Naive thymus-derived CD4-positive, alpha-beta T cell (primary cell): ENCODE measurements at regions of chr1 and their contacts with region 1.

Region 1: GRCh38 chr1:235866913-235867845 is 473 bp upstream of the LYST start:
- DNase-seq: peak; percentile 97 to 100 (median 99)
- ATAC-seq: peak; percentile 85
- H3K4me3 ChIP-seq: peak overlapping the region; percentile 89
- H3K4me3 Mint-ChIP-seq: peak overlapping the region; percentile 84 to 99 (median 96)
- H3K27ac ChIP-seq: peak overlapping the region; percentile 99
- H3K27ac Mint-ChIP-seq: peak overlapping the region; percentile 93 to 100 (median 98)
- H3K4me1 ChIP-seq: peaks cover 25 to 31% of the 10 kb centered on the region in 2 donors
- H3K4me1 Mint-ChIP-seq: peaks cover 32 to 55% (median 51%) of the 10 kb centered on the region in 7 donors
- H3K27me3 ChIP-seq: no peaks in the 10 kb centered on the region
- H3K27me3 Mint-ChIP-seq: no peaks in the 10 kb centered on the region

Region 2: GRCh38 chr1:235295902-235296376 is 571.2 kb before region 1 on chr1:
- CTCF ChIA-PET with region 1: no interaction called
- POLR2A ChIA-PET with region 1: no interaction called
- intact Hi-C with region 1: loop called in 1 of 2 experiments (anchors 2 kb)
- DNase-seq: no peak
- ATAC-seq: no peak
- H3K4me3 ChIP-seq: no peak overlapping the region
- H3K4me3 Mint-ChIP-seq: peak overlapping the region in 9 of 10 donors; percentile 4 to 81 (median 60)
- H3K27ac ChIP-seq: no peak overlapping the region
- H3K27ac Mint-ChIP-seq: peak overlapping the region; percentile 41 to 92 (median 79)
- H3K4me1 ChIP-seq: peaks cover 38 to 47% of the 10 kb centered on the region in 2 donors
- H3K4me1 Mint-ChIP-seq: peaks cover 33 to 77% (median 65%) of the 10 kb centered on the region in 7 donors
- H3K27me3 ChIP-seq: no peaks in the 10 kb centered on the region
- H3K27me3 Mint-ChIP-seq: no peaks in the 10 kb centered on the region

Region 3: DNA sequence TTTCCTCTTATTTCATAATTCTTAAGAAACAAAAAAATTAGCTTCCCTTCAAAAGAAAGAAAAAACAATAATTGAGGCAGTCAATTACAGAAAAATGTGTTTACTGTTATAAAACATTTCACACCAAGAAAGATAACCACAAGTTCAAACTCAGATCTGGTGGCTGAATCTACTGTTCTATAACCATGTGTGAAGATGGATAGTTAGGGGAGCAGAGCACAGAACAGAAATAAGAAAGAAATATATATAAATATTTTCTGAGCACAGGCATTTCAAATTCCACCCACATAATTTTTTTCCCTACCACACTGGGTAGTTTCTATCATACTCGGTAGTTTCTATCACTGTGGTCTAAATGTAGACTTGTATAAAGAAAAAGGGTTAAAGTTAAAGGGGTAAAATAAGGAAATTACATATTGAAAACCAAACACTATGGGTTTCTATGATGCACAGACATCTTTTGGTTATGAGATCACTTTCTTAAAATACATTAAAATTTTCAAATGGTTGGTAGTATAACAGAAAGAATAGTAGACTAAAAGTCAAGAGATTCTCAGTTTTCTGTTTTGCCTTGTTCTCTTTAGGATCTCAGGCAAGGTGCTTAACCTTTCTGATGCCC is 11.3 kb before region 1 on chr1:
- CTCF ChIA-PET with region 1: interaction called, 4 read pairs
- POLR2A ChIA-PET with region 1: interaction called, 13 read pairs
- intact Hi-C with region 1: loop called in 1 of 2 experiments (anchors 1 kb)
- DNase-seq: no peak
- ATAC-seq: no peak
- H3K4me3 ChIP-seq: no peak overlapping the region
- H3K4me3 Mint-ChIP-seq: no peak overlapping the region
- H3K27ac ChIP-seq: no peak overlapping the region
- H3K27ac Mint-ChIP-seq: no peak overlapping the region
- H3K4me1 ChIP-seq: peaks cover 7 to 25% of the 10 kb centered on the region in 2 donors
- H3K4me1 Mint-ChIP-seq: peaks cover 14 to 54% (median 25%) of the 10 kb centered on the region in 7 donors
- H3K27me3 ChIP-seq: no peaks in the 10 kb centered on the region
- H3K27me3 Mint-ChIP-seq: no peaks in the 10 kb centered on the region

Region 4: GRCh38 chr1:235954306-235955283 is 87.4 kb after region 1 on chr1:
- CTCF ChIA-PET with region 1: interaction called, 5 read pairs
- POLR2A ChIA-PET with region 1: interaction called, 9 read pairs
- intact Hi-C with region 1: loop called (anchors 1 to 5 kb)
- DNase-seq: peak in 8 of 9 donors; percentile 25 to 44 (median 36)
- ATAC-seq: peak; percentile 91
- H3K4me3 ChIP-seq: peak overlapping the region; percentile 41
- H3K4me3 Mint-ChIP-seq: peak overlapping the region; percentile 22 to 79 (median 56)
- H3K27ac ChIP-seq: peak overlapping the region; percentile 9
- H3K27ac Mint-ChIP-seq: peak overlapping the region in 8 of 9 donors; percentile 30 to 89 (median 70)
- H3K4me1 ChIP-seq: peaks cover 30 to 32% of the 10 kb centered on the region in 2 donors
- H3K4me1 Mint-ChIP-seq: peaks cover 35 to 40% (median 39%) of the 10 kb centered on the region in 7 donors
- H3K27me3 ChIP-seq: no peaks in the 10 kb centered on the region
- H3K27me3 Mint-ChIP-seq: peaks cover 0 to 2% (median 0%) of the 10 kb centered on the region in 5 donors

Region 5: DNA sequence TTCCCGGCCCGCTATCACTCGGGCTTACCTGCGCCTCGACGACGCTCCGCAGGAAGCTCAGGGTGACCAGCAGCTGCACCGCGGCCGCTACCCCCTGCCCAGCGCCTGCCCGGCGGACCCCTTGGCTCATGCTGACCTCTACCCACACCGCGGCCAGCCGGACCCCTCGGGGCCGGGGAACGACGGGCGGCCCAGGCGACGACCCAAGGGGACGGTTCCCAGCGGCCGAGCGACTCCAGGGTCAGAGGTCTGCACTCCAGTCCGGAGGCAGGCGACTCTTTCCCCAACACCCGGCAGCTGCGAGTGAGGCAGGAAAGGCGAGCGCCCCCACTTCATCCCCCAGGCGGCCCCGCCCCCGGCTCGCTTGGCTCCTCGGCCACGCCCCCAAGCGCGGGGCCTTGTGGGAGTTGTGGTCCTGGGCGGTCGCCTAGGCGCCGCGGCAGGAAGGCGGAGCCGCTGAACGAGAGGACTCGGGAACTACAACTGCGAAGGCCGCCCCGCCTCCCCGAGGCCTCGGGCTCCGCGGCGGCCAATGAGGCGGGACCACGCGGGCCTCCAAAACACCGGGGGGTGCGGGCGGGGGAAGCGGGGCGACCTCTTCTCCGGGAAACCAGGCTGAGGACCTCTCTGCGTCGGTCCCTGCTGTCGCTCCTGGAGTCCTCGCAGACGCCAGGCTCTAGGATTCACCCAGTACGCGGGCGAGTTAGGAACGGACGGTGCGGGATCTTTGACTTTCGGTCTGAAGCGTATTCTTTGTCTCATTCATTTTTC is 414.7 kb after region 1 on chr1 and contains the start of gene ERO1B:
- CTCF ChIA-PET with region 1: no interaction called
- POLR2A ChIA-PET with region 1: no interaction called
- intact Hi-C with region 1: loop called (anchors 1 to 5 kb)
- DNase-seq: peak; percentile 95 to 99 (median 97)
- ATAC-seq: peak; percentile 98
- H3K4me3 ChIP-seq: peak within 1 kb of the TSS; percentile 83
- H3K4me3 Mint-ChIP-seq: peak within 1 kb of the TSS; percentile 80 to 97 (median 94)
- H3K27ac ChIP-seq: peak within 1 kb of the TSS; percentile 82
- H3K27ac Mint-ChIP-seq: peak within 1 kb of the TSS; percentile 80 to 96 (median 95)
- H3K4me1 ChIP-seq: peaks cover 7 to 34% of the 10 kb centered on the region in 2 donors
- H3K4me1 Mint-ChIP-seq: peaks cover 29 to 82% (median 57%) of the 10 kb centered on the region in 7 donors
- H3K27me3 ChIP-seq: no peaks in the 10 kb centered on the region
- H3K27me3 Mint-ChIP-seq: peaks cover 0 to 10% (median 0%) of the 10 kb centered on the region in 5 donors
- total RNA-seq, gene ERO1B: 5.0 to 26.8 (median 16.0) TPM

Region 6: DNA sequence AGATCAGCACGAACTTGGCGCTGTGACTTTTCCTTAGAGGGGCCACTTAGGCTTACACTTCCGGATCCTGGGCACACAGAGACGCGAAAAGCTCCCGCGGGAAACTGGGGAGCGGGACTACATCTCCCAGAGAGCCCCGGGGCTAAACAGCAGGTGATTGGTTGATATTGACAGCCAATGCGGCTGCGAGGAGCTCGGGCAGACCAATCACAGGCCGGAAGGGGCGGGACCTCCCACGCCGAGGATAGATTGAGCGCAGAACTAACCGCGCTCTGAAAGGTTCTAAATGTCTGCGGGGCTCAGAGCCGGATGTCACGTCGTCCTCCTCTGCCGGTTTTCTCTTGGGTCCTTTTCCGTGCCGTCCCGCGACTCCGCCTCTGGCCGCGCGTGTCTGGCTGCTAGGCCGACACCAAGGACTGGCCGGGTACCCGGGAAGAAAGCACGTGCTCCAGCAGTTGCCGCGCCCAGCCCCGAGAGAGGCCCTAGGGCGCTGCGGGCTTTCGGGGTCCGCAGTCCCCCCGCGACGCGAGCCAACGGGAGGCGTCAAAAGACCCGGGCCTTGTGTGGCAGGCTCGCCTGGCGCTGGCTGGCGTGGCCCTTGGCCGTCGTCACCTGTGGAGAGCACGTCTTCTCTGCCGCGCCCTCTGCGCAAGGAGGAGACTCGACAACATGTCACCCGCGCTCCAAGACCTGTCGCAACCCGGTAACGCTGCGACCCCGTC is 928.0 kb after region 1 on chr1 and contains the start of gene MTR:
- CTCF ChIA-PET with region 1: no interaction called
- POLR2A ChIA-PET with region 1: no interaction called
- intact Hi-C with region 1: loop called in 1 of 2 experiments (anchors 2 kb)
- DNase-seq: peak; percentile 84 to 97 (median 96)
- ATAC-seq: peak; percentile 95
- H3K4me3 ChIP-seq: peak within 1 kb of the TSS; percentile 61
- H3K4me3 Mint-ChIP-seq: peak within 1 kb of the TSS; percentile 87 to 99 (median 95)
- H3K27ac ChIP-seq: peak within 1 kb of the TSS; percentile 98
- H3K27ac Mint-ChIP-seq: peak within 1 kb of the TSS; percentile 93 to 100 (median 97)
- H3K4me1 ChIP-seq: peaks cover 13 to 14% of the 10 kb centered on the region in 2 donors
- H3K4me1 Mint-ChIP-seq: peaks cover 14 to 49% (median 41%) of the 10 kb centered on the region in 7 donors
- H3K27me3 ChIP-seq: no peaks in the 10 kb centered on the region
- H3K27me3 Mint-ChIP-seq: peaks cover 0 to 13% (median 0%) of the 10 kb centered on the region in 5 donors
- total RNA-seq, gene MTR: 42.9 to 78.8 (median 49.4) TPM